ENCODE measurements at regions of chr11 and their contacts with region 1.

Region 1: DNA sequence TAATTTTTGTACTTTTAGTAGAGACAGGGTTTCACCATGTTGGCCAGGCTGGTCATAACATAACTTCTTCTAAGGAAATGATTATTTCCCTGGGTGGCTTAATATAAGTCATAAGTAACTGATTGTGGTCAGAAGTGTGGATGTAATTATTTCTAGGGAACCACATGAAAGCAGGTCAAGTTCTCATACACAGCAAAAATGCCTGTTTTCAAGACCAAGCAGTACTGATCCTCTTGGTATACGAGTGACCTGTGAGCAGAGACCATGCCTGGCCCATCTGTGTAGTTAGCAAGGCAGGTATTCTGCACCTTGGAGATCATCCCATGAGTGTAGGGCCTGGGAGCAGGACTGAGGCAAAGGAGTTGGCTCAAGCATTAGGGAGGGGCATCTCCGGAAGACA is 32.5 kb upstream of the NUCB2 start:
- DNase-seq: no peak
- ATAC-seq: no peak
- H3K4me3 ChIP-seq: no peak overlapping the region
- H3K27ac ChIP-seq: no peak overlapping the region
- H3K4me1 ChIP-seq: no peaks in the 10 kb centered on the region
- H3K27me3 ChIP-seq: no peaks in the 10 kb centered on the region

Region 2: GRCh38 chr11:17519061-17519885 is 275.2 kb after region 1 on chr11:
- intact Hi-C with region 1: loop called in 1 of 4 experiments (anchors 10 kb)
- DNase-seq: no peak
- ATAC-seq: no peak
- H3K4me3 ChIP-seq: no peak overlapping the region
- H3K27ac ChIP-seq: no peak overlapping the region
- H3K4me1 ChIP-seq: no peaks in the 10 kb centered on the region
- H3K27me3 ChIP-seq: no peaks in the 10 kb centered on the region